Left cardiac atrium (tissue), 4 donors: ENCODE measurements at regions of chr20 and their contacts with region 1.

Region 1: GRCh38 chr20:35215066-35215956 is 11.2 kb upstream of the MMP24 start:
- DNase-seq: no peak
- ATAC-seq: no peak

Region 2: DNA sequence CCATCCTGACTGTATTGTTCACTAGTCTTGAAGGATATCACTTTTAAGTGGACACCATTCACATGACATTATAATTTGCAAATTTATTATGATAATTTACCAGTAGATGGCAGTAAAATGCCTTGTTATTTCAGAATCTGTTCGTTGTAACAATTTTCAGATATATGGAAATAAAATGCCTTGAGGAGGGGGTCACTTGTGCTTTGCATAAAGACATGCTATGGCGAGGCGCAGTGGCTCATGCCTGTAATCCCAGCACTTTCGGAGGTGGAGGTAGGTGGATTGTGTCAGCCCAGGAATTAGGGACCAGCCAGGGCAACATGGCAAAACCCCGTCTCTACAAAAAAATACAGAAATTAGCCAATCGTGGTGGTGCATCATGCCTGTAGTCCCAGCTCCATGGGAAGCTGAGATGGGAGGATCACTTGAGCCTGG is 380.8 kb before region 1 on chr20:
- intact Hi-C with region 1: loop called in 1 of 2 experiments (anchors 10 kb)
- DNase-seq: no peak
- ATAC-seq: peak; percentile 31 to 53

Region 3: GRCh38 chr20:35269055-35269781 is 53.9 kb after region 1 on chr20:
- intact Hi-C with region 1: no loop called
- DNase-seq: peak; percentile 68
- ATAC-seq: peak; percentile 55 to 65

Region 4: DNA sequence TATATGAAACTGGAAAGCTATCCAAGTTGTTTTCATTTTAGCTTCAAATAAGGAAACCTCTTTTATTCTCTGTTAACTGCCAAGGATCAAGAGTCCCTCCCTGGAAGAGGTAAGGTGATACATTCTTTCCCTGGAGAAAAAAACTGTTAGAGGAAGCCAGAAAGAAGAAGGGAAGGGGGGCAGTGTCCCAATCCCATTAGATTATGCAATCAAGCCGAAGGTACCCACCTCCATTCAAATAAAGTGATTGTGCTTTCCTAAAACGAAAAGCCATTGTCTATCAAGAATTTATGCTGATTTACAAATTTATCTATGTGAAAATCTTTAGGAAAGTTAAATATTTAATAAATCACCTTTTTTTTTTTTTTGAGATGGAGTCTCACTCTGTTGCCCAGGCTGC is 206.0 kb after region 1 on chr20:
- intact Hi-C with region 1: loop called in 1 of 2 experiments (anchors 10 kb)
- DNase-seq: no peak
- ATAC-seq: no peak